Endothelial cell of umbilical vein (primary cell): ENCODE measurements at regions of chr4 and their contacts with region 1.

Region 1: GRCh38 chr4:110586131-110586850 is 36.6 kb downstream of the PITX2 start:
- DNase-seq: peak; percentile 64
- H3K4me3 ChIP-seq: peak overlapping the region in 1 of 3 experiments; percentile 40
- H3K27ac ChIP-seq: no peak overlapping the region
- H3K4me1 ChIP-seq: no peaks in the 10 kb centered on the region
- H3K27me3 ChIP-seq: no peaks in the 10 kb centered on the region
- CTCF ChIP-seq: peak; percentile 43 to 47
- POLR2A ChIP-seq: no peak

Region 2: DNA sequence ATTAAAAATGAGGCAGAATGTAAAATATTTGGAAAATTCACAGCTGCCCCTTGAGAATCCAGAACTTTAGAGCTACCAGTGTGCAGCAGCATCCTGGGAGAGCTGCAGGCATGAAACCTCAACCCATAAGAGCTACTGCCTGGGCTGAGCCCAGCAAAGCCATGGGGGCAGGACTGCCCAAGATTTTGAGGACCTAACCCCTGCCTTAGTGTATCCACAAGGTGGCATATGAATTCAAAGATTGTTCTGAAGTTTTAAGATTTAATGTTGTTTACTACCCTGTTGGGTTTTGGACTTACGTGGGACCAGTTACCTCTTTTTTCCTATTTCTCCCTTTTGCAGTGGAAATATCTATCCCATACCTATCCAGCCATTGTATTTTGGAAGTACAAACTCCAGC is 909.4 kb before region 1 on chr4:
- CTCF ChIA-PET with region 1: no interaction called
- POLR2A ChIA-PET with region 1: no interaction called
- dilution Hi-C with region 1: no loop called
- intact Hi-C with region 1: no loop called
- DNase-seq: no peak
- H3K4me3 ChIP-seq: no peak overlapping the region
- H3K27ac ChIP-seq: no peak overlapping the region
- H3K4me1 ChIP-seq: no peaks in the 10 kb centered on the region
- H3K27me3 ChIP-seq: no peaks in the 10 kb centered on the region
- CTCF ChIP-seq: no peak
- POLR2A ChIP-seq: no peak

Region 3: GRCh38 chr4:109998867-109999584 is 587.3 kb before region 1 on chr4:
- CTCF ChIA-PET with region 1: interaction called, 6 read pairs
- POLR2A ChIA-PET with region 1: no interaction called
- dilution Hi-C with region 1: no loop called
- intact Hi-C with region 1: loop called (anchors 2 kb)
- DNase-seq: peak; percentile 59
- H3K4me3 ChIP-seq: no peak overlapping the region
- H3K27ac ChIP-seq: no peak overlapping the region
- H3K4me1 ChIP-seq: no peaks in the 10 kb centered on the region
- H3K27me3 ChIP-seq: peaks cover 11 to 16% of the 10 kb centered on the region in 2 experiments
- CTCF ChIP-seq: peak; percentile 39 to 44
- POLR2A ChIP-seq: no peak

Region 4: GRCh38 chr4:110344162-110344561 is 242.1 kb before region 1 on chr4:
- CTCF ChIA-PET with region 1: interaction called, 10 read pairs
- POLR2A ChIA-PET with region 1: no interaction called
- dilution Hi-C with region 1: no loop called
- intact Hi-C with region 1: no loop called
- DNase-seq: no peak
- H3K4me3 ChIP-seq: no peak overlapping the region
- H3K27ac ChIP-seq: no peak overlapping the region
- H3K4me1 ChIP-seq: no peaks in the 10 kb centered on the region
- H3K27me3 ChIP-seq: no peaks in the 10 kb centered on the region
- CTCF ChIP-seq: no peak
- POLR2A ChIP-seq: no peak

Region 5: GRCh38 chr4:110527156-110527555 is 59.1 kb before region 1 on chr4:
- CTCF ChIA-PET with region 1: interaction called, 20 read pairs
- POLR2A ChIA-PET with region 1: no interaction called
- dilution Hi-C with region 1: no loop called
- intact Hi-C with region 1: no loop called
- DNase-seq: no peak
- H3K4me3 ChIP-seq: no peak overlapping the region
- H3K27ac ChIP-seq: no peak overlapping the region
- H3K4me1 ChIP-seq: peaks cover 20% of the 10 kb centered on the region
- H3K27me3 ChIP-seq: no peaks in the 10 kb centered on the region
- CTCF ChIP-seq: no peak
- POLR2A ChIP-seq: no peak

Region 6: DNA sequence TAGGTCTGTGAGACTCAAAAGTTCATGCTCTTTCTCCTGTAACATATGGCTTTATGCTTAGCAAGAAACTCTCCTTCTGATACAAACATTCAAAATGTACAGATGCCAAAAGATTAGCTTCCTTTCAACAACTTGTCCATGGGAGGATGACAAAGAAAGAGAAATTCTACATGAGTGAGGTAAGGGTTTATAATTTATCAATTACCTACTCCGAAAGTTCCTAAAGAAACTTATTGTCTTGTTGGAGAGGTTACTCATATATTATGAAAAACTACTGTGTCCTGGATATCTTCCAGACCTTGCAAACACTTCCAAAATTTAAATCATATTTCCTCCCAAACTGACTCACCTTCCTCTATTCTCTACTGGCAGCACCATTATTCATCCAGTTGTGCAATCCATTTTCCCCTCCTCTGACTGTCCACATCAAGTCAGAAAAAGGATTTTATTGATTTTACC is 45.3 kb before region 1 on chr4:
- CTCF ChIA-PET with region 1: interaction called, 22 read pairs
- POLR2A ChIA-PET with region 1: no interaction called
- dilution Hi-C with region 1: no loop called
- intact Hi-C with region 1: loop called (anchors 2 kb)
- DNase-seq: peak; percentile 94
- H3K4me3 ChIP-seq: peak overlapping the region in 1 of 3 experiments; percentile 23
- H3K27ac ChIP-seq: peak overlapping the region; percentile 99
- H3K4me1 ChIP-seq: peaks cover 25% of the 10 kb centered on the region
- H3K27me3 ChIP-seq: no peaks in the 10 kb centered on the region
- CTCF ChIP-seq: no peak
- POLR2A ChIP-seq: no peak

Region 7: GRCh38 chr4:110567214-110567613 is 19.1 kb before region 1 on chr4:
- CTCF ChIA-PET with region 1: interaction called, 13 read pairs
- POLR2A ChIA-PET with region 1: no interaction called
- dilution Hi-C with region 1: no loop called
- intact Hi-C with region 1: no loop called
- DNase-seq: no peak
- H3K4me3 ChIP-seq: no peak overlapping the region
- H3K27ac ChIP-seq: no peak overlapping the region
- H3K4me1 ChIP-seq: no peaks in the 10 kb centered on the region
- H3K27me3 ChIP-seq: peaks cover 0 to 2% of the 10 kb centered on the region in 2 experiments
- CTCF ChIP-seq: no peak
- POLR2A ChIP-seq: no peak

Region 8: GRCh38 chr4:111854494-111855087 is 1268.3 kb after region 1 on chr4:
- CTCF ChIA-PET with region 1: no interaction called
- POLR2A ChIA-PET with region 1: no interaction called
- dilution Hi-C with region 1: no loop called
- intact Hi-C with region 1: no loop called
- DNase-seq: peak; percentile 39
- H3K4me3 ChIP-seq: no peak overlapping the region
- H3K27ac ChIP-seq: no peak overlapping the region
- H3K4me1 ChIP-seq: no peaks in the 10 kb centered on the region
- H3K27me3 ChIP-seq: peaks cover 0 to 8% of the 10 kb centered on the region in 2 experiments
- CTCF ChIP-seq: peak; percentile 34 to 49
- POLR2A ChIP-seq: no peak